ENCODE measurements at regions of chr17 and their contacts with region 1.

Region 1: DNA sequence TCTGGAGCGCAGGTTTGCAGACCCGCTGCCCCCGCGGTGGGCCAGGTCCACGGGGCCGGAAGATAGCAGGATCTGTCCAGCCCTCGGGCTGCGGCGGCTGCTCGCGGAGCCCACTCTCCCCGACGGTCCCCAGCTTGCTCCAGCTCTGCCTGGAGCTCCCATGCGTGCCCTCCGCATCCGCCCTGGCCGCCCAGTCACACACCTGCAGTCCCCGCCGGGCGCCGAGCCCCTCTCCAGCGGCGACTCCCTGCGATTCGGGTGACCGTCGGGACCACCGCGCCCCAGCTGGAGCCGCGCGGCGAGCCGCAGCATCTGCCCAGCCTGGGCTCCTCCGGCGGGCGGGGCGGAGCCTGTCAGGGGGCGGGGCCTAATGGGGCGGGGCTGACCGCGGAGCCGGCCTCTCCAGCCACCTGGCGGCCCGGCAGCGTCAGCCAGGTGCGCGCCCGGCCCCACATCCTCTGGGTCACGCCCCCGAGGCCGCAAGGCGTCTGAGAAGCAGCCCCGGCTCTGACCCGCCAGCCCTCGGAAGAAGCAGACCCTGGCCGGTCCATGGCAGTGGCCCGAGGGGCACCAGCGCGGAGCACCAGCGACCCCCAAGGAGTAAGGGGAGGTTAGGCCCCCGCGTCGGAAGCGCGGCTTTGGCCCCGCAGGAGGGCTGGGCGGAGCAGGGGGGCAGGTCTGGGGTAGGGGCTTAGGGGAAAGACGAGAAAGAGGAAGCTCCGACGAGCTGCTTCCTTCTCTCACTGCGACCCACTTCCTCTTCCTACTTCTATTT is at the start of gene PIK3R5:
- DNase-seq: no peak
- ATAC-seq: peak; percentile 79
- H3K4me3 ChIP-seq: peak within 1 kb of the TSS; percentile 90
- H3K27ac ChIP-seq: peak within 1 kb of the TSS; percentile 80
- H3K4me1 ChIP-seq: peaks cover 28% of the 10 kb centered on the region
- H3K27me3 ChIP-seq: no peaks in the 10 kb centered on the region
- CTCF ChIP-seq: peak in 1 of 3 experiments; percentile 27; a peak in 2 of 6 replicates
- EP300 ChIP-seq: no peak
- POLR2A ChIP-seq: peak; percentile 87
- RAD21 ChIP-seq: no peak
- polyA plus RNA-seq, gene PIK3R5: 9.5 to 9.6 TPM

Region 2: GRCh38 chr17:8867361-8867981 is 98.1 kb before region 1 on chr17 and contains the start of gene PIK3R6:
- CTCF ChIA-PET with region 1: interaction called, 3 read pairs
- POLR2A ChIA-PET with region 1: interaction called, 8 read pairs
- RAD21 ChIA-PET with region 1: interaction called, 5 read pairs
- SMC1A ChIA-PET with region 1: interaction called, 11 read pairs
- in situ Hi-C with region 1: no loop called
- intact Hi-C with region 1: no loop called
- DNase-seq: no peak
- ATAC-seq: peak; percentile 65
- H3K4me3 ChIP-seq: peak within 1 kb of the TSS; percentile 99
- H3K27ac ChIP-seq: peak within 1 kb of the TSS; percentile 88
- H3K4me1 ChIP-seq: peaks cover 25% of the 10 kb centered on the region
- H3K27me3 ChIP-seq: no peaks in the 10 kb centered on the region
- CTCF ChIP-seq: no peak
- EP300 ChIP-seq: no peak
- POLR2A ChIP-seq: peak; percentile 83
- RAD21 ChIP-seq: no peak
- polyA plus RNA-seq, gene PIK3R6: 6.7 to 7.4 TPM

Region 3: GRCh38 chr17:8935191-8935590 is 30.4 kb before region 1 on chr17:
- CTCF ChIA-PET with region 1: interaction called, 3 read pairs
- POLR2A ChIA-PET with region 1: interaction called, 35 read pairs
- RAD21 ChIA-PET with region 1: interaction called, 69 read pairs
- SMC1A ChIA-PET with region 1: interaction called, 345 read pairs
- in situ Hi-C with region 1: no loop called
- intact Hi-C with region 1: no loop called
- DNase-seq: no peak
- ATAC-seq: peak; percentile 69
- H3K4me3 ChIP-seq: no peak overlapping the region
- H3K27ac ChIP-seq: peak overlapping the region; percentile 59
- H3K4me1 ChIP-seq: peaks cover 29% of the 10 kb centered on the region
- H3K27me3 ChIP-seq: no peaks in the 10 kb centered on the region
- CTCF ChIP-seq: no peak
- EP300 ChIP-seq: no peak
- POLR2A ChIP-seq: no peak
- RAD21 ChIP-seq: no peak

Region 4: DNA sequence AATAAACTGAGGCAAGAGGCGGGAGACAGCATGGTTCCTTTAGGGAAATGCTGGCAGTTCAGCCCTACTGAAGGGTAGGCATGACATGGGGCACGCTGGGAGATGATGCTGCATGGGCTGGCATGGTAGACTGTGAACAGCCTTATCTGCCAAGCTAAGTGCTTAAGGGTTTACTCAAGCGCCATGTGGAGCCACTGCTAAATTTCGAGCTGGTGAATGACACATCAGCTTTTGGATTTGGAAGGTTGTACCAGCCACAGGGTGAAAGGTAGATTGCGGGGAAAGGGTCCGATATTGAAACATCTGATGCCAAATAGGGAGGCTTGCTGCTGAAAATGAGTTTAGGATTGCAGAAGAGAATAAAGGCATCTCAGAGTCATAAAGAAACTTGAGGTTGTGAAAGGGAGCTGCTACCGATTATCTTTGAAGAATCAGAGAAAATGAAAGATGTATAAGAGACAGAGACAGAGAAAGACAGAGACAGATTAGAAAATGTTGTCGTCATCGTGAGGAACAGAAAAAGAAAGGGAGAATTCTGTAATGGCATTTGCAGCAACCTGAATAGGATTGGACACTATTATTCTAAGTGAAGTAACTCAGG is 16.4 kb before region 1 on chr17:
- CTCF ChIA-PET with region 1: interaction called, 10 read pairs
- POLR2A ChIA-PET with region 1: interaction called, 56 read pairs
- RAD21 ChIA-PET with region 1: interaction called, 69 read pairs
- SMC1A ChIA-PET with region 1: interaction called, 345 read pairs
- in situ Hi-C with region 1: no loop called
- intact Hi-C with region 1: no loop called
- DNase-seq: no peak
- ATAC-seq: peak; percentile 78
- H3K4me3 ChIP-seq: peak overlapping the region; percentile 45; the same call in 1 of the 2 replicates
- H3K27ac ChIP-seq: peak overlapping the region; percentile 62
- H3K4me1 ChIP-seq: peaks cover 58% of the 10 kb centered on the region
- H3K27me3 ChIP-seq: no peaks in the 10 kb centered on the region
- CTCF ChIP-seq: no peak
- EP300 ChIP-seq: peak in 1 of 2 experiments; percentile 30; a peak in 1 of 4 replicates
- POLR2A ChIP-seq: no peak
- RAD21 ChIP-seq: no peak

Region 5: GRCh38 chr17:8976638-8977037 is 11.1 kb after region 1 on chr17:
- CTCF ChIA-PET with region 1: interaction called, 13 read pairs
- POLR2A ChIA-PET with region 1: interaction called, 9 read pairs
- RAD21 ChIA-PET with region 1: interaction called, 8 read pairs
- SMC1A ChIA-PET with region 1: interaction called, 17 read pairs
- in situ Hi-C with region 1: no loop called
- intact Hi-C with region 1: loop called (anchors 2 kb)
- DNase-seq: no peak
- ATAC-seq: peak; percentile 71
- H3K4me3 ChIP-seq: no peak overlapping the region; the same call in 1 of the 2 replicates
- H3K27ac ChIP-seq: peak overlapping the region; percentile 81
- H3K4me1 ChIP-seq: peaks cover 26% of the 10 kb centered on the region
- H3K27me3 ChIP-seq: no peaks in the 10 kb centered on the region
- CTCF ChIP-seq: no peak
- EP300 ChIP-seq: no peak
- POLR2A ChIP-seq: no peak
- RAD21 ChIP-seq: no peak

Region 6: DNA sequence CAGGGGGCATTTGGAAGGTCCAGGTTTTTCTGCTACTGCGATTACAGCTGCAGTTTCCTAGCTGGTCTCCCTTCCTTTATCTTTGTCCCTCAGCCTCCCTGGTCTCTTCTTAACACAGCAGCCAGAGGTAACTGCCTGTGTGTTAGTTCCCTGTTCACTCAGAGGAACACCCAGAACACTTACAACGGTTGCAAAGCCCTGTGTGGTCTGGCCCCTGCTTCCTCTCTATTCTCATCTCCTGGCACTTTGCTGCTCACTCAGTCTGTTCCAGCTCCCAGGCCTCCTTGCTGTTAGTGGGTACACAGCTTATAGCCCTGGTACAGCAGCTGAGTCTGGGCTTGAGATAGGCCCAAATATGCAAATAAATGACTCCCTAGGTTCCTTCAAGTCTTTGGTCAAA is 72.2 kb after region 1 on chr17:
- CTCF ChIA-PET with region 1: no interaction called
- POLR2A ChIA-PET with region 1: no interaction called
- RAD21 ChIA-PET with region 1: no interaction called
- SMC1A ChIA-PET with region 1: no interaction called
- in situ Hi-C with region 1: no loop called
- intact Hi-C with region 1: no loop called
- DNase-seq: no peak
- ATAC-seq: no peak
- H3K4me3 ChIP-seq: no peak overlapping the region
- H3K27ac ChIP-seq: no peak overlapping the region
- H3K4me1 ChIP-seq: no peaks in the 10 kb centered on the region
- H3K27me3 ChIP-seq: no peaks in the 10 kb centered on the region
- CTCF ChIP-seq: no peak
- EP300 ChIP-seq: no peak
- POLR2A ChIP-seq: no peak
- RAD21 ChIP-seq: no peak

Region 7: DNA sequence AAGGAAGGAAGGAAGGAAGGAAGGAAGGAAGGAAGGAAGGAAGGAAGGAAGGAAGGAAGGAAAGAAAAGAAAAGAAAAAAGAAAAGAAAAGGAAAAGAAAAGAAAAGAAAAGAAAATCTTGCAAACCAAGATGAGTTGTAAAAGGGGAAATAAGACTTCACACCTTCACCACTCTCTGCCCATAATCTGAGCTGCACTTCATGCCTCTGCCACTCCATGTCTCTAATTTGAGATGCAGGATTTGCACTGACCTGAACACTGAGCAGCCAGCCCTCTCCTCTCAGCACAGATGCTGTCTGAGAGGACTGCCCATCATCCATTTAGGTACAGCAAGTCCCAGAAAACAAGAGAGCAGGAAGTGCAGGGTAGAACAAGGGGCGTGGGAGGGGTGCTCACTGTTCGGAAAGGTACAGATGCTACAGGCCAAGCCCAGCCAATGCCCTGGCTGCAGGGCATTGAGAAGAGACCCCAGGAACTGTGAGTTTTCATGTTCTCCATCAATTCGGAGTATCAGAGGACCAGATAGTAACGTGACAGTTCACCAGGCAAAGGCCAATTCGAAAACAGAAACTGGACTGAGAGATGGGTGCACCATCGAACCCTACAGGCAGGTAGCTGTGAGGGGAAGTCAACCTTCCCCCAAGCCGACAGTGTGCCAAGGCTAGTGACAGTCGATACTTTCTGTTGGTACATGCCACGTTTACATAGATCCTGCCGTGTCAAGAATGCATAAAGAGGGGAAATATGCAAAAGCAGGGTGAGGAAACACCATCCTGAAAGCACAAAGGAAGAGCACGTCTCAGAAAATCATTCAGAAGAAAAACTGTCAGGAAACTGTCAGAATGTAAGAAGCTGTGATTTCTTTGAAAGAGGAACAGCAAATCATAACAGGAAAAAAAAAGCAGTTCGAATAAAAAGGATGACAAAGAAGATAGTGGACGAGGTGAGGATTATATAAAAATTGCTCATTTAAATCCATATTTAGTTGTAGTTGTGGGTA is 1081.5 kb after region 1 on chr17:
- CTCF ChIA-PET with region 1: no interaction called
- POLR2A ChIA-PET with region 1: no interaction called
- RAD21 ChIA-PET with region 1: no interaction called
- SMC1A ChIA-PET with region 1: no interaction called
- in situ Hi-C with region 1: loop called (anchors 25 kb)
- intact Hi-C with region 1: no loop called
- DNase-seq: peak; percentile 82
- ATAC-seq: peak; percentile 85
- H3K4me3 ChIP-seq: peak overlapping the region; percentile 52; the same call in 1 of the 2 replicates
- H3K27ac ChIP-seq: peak overlapping the region; percentile 51
- H3K4me1 ChIP-seq: peaks cover 23% of the 10 kb centered on the region
- H3K27me3 ChIP-seq: no peaks in the 10 kb centered on the region
- CTCF ChIP-seq: no peak
- EP300 ChIP-seq: peak in 1 of 2 experiments; percentile 61; a peak in 1 of 4 replicates
- POLR2A ChIP-seq: no peak
- RAD21 ChIP-seq: no peak